ENCODE measurements at regions of chr17 and their contacts with region 1.

Region 1: GRCh38 chr17:47949136-47949759 is 7.9 kb downstream of the PNPO start:
- DNase-seq: peak; percentile 68 to 97 (median 86)

Region 2: GRCh38 chr17:47733047-47733673 is 216.1 kb before region 1 on chr17 and contains the start of gene TBX21:
- intact Hi-C with region 1: no loop called
- DNase-seq: peak in 5 of 10 donors; percentile 18 to 85 (median 41)

Region 3: GRCh38 chr17:47970704-47971463 is 21.6 kb after region 1 on chr17 and contains the start of gene CDK5RAP3:
- intact Hi-C with region 1: loop called (anchors 2 kb)
- DNase-seq: peak; percentile 99 to 100 (median 100)

Measured in posterior cingulate gyrus (tissue), 11 donors.